Sigmoid colon (tissue), 7 donors: ENCODE measurements at regions of chr3 and their contacts with region 1.

Region 1: DNA sequence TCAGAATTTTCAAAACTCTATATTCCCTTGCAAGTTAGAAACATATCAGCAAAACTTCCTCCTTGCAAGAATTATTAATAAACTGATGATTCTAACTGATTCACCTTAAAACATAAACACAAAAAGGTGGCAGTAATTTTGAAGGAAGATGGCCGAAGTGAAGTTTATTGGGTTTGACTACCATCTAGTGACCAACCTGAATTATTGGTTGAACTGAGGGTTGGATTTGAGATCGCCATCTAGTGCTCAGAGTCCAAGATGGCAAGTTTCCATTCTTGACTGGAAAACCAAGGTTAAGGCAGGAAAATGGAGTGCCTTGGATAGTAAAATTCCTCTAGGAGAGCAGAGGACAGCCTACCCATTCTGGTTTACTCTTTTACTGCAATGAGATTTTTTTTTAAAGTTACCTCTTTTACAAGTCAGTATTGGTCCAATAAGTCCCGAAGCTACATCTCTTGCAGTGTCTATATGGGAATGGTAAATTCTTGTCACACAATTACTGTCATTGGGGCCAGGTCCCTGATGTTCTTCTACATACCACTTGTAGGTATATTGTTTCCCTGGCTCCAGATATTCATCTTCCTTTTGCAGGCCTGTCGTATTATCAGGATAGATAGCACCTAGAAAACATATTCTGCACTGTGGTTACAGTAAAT is 51.6 kb upstream of the CP start:
- DNase-seq: no peak
- H3K4me3 ChIP-seq: no peak overlapping the region
- H3K27ac ChIP-seq: peak overlapping the region in 1 of 4 donors; percentile 13
- H3K4me1 ChIP-seq: peaks cover 0 to 15% (median 3%) of the 10 kb centered on the region in 4 donors
- H3K27me3 ChIP-seq: no peaks in the 10 kb centered on the region
- CTCF ChIP-seq: peak; percentile 86 to 93 (median 88)
- EP300 ChIP-seq: no peak
- POLR2A ChIP-seq: no peak

Region 2: DNA sequence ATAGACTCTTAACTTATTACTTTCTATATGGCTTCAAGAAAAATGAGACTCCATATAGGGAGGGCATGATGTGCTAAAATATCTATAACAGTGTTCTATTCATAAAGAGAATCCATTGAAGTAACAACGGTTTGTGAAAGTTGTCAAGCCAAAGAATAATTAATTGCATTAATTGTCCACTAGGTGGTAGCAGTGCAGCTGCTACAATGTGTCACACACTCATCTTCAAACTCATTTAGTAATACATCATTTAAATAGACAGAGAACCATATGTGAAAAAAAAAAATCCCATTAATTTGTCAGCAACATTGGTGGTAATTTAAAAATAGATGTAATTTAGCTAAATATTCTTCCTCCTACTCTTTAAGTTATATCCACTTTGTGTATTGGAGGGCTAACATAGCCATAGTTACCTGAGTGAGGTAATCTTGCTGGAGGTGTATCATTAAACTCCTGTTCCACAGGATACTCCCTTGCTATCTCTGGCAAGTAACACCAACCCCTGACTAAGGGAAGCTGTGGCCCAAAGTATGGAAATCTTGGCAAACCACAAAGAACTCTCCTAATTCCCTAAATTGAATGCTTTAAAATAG is 411.9 kb before region 1 on chr3:
- intact Hi-C with region 1: loop called (anchors 5 kb)
- DNase-seq: no peak
- H3K4me3 ChIP-seq: no peak overlapping the region
- H3K27ac ChIP-seq: no peak overlapping the region
- H3K4me1 ChIP-seq: no peaks in the 10 kb centered on the region
- H3K27me3 ChIP-seq: no peaks in the 10 kb centered on the region
- CTCF ChIP-seq: peak; percentile 28 to 79 (median 58)
- EP300 ChIP-seq: no peak
- POLR2A ChIP-seq: no peak

Region 3: GRCh38 chr3:149120051-149120972 is 152.9 kb before region 1 on chr3:
- intact Hi-C with region 1: loop called (anchors 2 kb)
- DNase-seq: no peak
- H3K4me3 ChIP-seq: no peak overlapping the region
- H3K27ac ChIP-seq: no peak overlapping the region
- H3K4me1 ChIP-seq: peaks cover 0 to 6% (median under 1%) of the 10 kb centered on the region in 4 donors
- H3K27me3 ChIP-seq: no peaks in the 10 kb centered on the region
- CTCF ChIP-seq: peak; percentile 32 to 55 (median 47)
- EP300 ChIP-seq: no peak
- POLR2A ChIP-seq: no peak

Region 4: GRCh38 chr3:149180057-149180573 is 93.1 kb before region 1 on chr3:
- intact Hi-C with region 1: loop called (anchors 10 kb)
- DNase-seq: peak; percentile 96
- H3K4me3 ChIP-seq: no peak overlapping the region
- H3K27ac ChIP-seq: peak overlapping the region; percentile 51 to 68 (median 63)
- H3K4me1 ChIP-seq: peaks cover 0 to 19% (median under 1%) of the 10 kb centered on the region in 4 donors
- H3K27me3 ChIP-seq: no peaks in the 10 kb centered on the region
- CTCF ChIP-seq: no peak
- EP300 ChIP-seq: peak in 3 of 4 donors; percentile 20 to 76 (median 44)
- POLR2A ChIP-seq: no peak

Region 5: DNA sequence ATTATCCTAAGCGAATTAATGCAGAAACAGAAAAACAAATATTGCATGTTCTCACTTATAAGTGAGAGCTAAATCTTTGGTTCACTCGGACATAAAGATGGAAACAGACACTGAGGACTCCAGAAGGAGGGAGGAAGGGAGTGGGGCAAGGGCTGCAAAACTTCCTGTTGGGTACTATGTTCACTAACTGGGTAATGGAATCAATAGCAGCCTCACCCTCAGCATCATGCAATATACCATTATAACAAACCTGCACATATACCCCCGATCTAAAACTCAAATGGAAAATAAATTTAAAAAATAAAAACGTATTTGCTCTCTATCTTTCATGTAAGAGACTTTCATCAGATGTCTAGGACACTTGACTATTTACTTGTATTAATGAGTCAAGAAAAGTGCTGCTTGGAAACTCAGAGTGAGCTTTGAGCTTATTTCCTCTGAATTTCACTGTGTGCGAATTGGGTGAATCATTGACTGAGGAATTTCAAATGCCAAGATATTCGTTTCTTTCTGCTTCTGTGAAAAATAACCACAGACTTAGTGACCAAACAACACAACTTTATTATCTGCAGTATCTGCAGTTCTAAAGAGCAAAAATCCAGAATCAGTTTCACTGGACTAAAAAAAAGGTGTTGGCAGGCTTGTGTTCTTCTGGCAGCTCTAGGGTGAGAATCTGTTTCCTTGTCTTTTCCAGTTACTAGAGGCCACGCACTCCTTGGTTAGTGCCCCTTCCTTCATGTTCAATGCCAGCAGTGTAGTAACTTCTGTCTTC is 41.8 kb after region 1 on chr3:
- intact Hi-C with region 1: no loop called
- DNase-seq: no peak
- H3K4me3 ChIP-seq: no peak overlapping the region
- H3K27ac ChIP-seq: no peak overlapping the region
- H3K4me1 ChIP-seq: no peaks in the 10 kb centered on the region
- H3K27me3 ChIP-seq: no peaks in the 10 kb centered on the region
- CTCF ChIP-seq: no peak
- EP300 ChIP-seq: no peak
- POLR2A ChIP-seq: no peak